ENCODE measurements at regions of chr2 and their contacts with region 1.

Region 1: GRCh38 chr2:24382363-24383073 is 22.2 kb upstream of the ITSN2 start:
- DNase-seq: peak; percentile 32 to 83 (median 50)
- ATAC-seq: peak; percentile 94
- H3K4me3 ChIP-seq: no peak overlapping the region
- H3K4me3 Mint-ChIP-seq: no peak overlapping the region
- H3K27ac ChIP-seq: no peak overlapping the region
- H3K27ac Mint-ChIP-seq: no peak overlapping the region
- H3K4me1 ChIP-seq: no peaks in the 10 kb centered on the region
- H3K4me1 Mint-ChIP-seq: no peaks in the 10 kb centered on the region
- H3K27me3 ChIP-seq: no peaks in the 10 kb centered on the region
- H3K27me3 Mint-ChIP-seq: no peaks in the 10 kb centered on the region
- CTCF ChIP-seq: peak; percentile 86

Region 2: DNA sequence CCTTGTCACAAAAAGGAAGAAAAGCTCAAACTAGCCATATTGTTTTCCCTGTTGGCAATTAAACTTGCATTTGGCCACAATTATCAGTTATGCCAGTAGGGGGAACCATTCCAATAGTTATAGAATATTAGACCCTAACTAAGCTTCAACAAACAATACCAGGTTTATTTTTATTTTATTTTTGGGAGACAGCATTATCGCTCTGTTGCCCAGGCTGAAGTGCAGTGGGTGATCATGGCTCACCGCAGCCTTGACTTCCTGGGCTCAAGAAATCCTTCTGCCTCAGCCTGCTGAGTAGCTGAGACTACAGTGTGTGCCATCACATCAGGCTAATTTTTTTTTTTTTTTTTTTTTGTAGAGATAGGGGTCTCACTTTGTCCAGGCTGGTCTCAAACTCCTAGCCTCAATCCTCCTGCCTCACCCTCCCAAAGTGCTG is 557.7 kb before region 1 on chr2:
- CTCF ChIA-PET with region 1: no interaction called
- POLR2A ChIA-PET with region 1: no interaction called
- intact Hi-C with region 1: loop called (anchors 5 kb)
- DNase-seq: peak in 6 of 14 experiments; percentile 4 to 72 (median 51)
- ATAC-seq: peak; percentile 70
- H3K4me3 ChIP-seq: no peak overlapping the region
- H3K4me3 Mint-ChIP-seq: no peak overlapping the region
- H3K27ac ChIP-seq: no peak overlapping the region
- H3K27ac Mint-ChIP-seq: no peak overlapping the region
- H3K4me1 ChIP-seq: no peaks in the 10 kb centered on the region
- H3K4me1 Mint-ChIP-seq: no peaks in the 10 kb centered on the region
- H3K27me3 ChIP-seq: no peaks in the 10 kb centered on the region
- H3K27me3 Mint-ChIP-seq: no peaks in the 10 kb centered on the region
- CTCF ChIP-seq: peak; percentile 79

Region 3: DNA sequence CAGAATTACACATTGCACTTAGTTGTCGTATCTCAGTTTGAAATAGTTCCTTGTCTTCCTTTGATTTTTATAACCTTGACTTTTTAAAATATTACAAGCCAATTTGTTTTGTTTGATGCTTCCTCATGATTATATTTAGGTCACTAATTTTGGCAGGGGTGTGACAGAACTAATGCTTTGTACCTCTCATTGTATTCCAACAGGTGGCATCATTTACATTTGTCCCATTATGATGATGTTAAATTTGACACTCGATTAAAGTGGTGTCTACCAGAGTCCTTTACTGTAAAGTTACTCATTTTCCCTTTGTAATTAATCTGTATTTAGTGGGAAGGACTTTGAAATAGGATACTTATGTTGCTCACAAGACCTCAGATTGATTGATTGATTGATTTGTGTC is 394.1 kb before region 1 on chr2:
- CTCF ChIA-PET with region 1: no interaction called
- POLR2A ChIA-PET with region 1: no interaction called
- intact Hi-C with region 1: loop called in 1 of 2 experiments (anchors 10 kb)
- DNase-seq: peak in 3 of 14 experiments; percentile 40 to 44 (median 43)
- ATAC-seq: peak; percentile 66
- H3K4me3 ChIP-seq: no peak overlapping the region
- H3K4me3 Mint-ChIP-seq: no peak overlapping the region
- H3K27ac ChIP-seq: no peak overlapping the region
- H3K27ac Mint-ChIP-seq: no peak overlapping the region
- H3K4me1 ChIP-seq: no peaks in the 10 kb centered on the region
- H3K4me1 Mint-ChIP-seq: no peaks in the 10 kb centered on the region
- H3K27me3 ChIP-seq: no peaks in the 10 kb centered on the region
- H3K27me3 Mint-ChIP-seq: no peaks in the 10 kb centered on the region
- CTCF ChIP-seq: peak; percentile 39

Region 4: GRCh38 chr2:24228470-24228869 is 154.0 kb before region 1 on chr2:
- CTCF ChIA-PET with region 1: no interaction called
- POLR2A ChIA-PET with region 1: no interaction called
- intact Hi-C with region 1: loop called (anchors 2 kb)
- DNase-seq: peak in 1 of 14 experiments; percentile 9
- ATAC-seq: no peak
- H3K4me3 ChIP-seq: no peak overlapping the region
- H3K4me3 Mint-ChIP-seq: no peak overlapping the region
- H3K27ac ChIP-seq: no peak overlapping the region
- H3K27ac Mint-ChIP-seq: no peak overlapping the region
- H3K4me1 ChIP-seq: no peaks in the 10 kb centered on the region
- H3K4me1 Mint-ChIP-seq: no peaks in the 10 kb centered on the region
- H3K27me3 ChIP-seq: no peaks in the 10 kb centered on the region
- H3K27me3 Mint-ChIP-seq: no peaks in the 10 kb centered on the region
- CTCF ChIP-seq: no peak

Region 5: DNA sequence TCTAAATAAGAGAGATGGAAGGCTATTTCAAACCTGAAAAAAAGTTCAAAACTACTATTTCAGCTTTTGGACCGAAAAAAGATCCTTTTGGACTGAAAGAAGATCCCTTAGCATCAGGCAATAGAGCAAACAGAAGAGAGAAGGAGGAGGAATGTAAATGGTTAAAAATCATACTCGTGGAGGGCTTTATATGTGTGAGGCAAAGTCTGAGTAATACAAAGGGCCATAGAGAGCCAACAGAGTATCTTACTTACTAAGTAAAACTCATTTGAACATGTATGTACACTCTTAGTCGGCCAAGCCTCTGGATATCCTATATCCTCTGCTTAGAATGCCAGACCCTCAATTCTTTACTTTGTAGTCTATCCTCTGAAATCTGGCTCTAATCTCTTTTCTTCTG is 77.9 kb before region 1 on chr2:
- CTCF ChIA-PET with region 1: no interaction called
- POLR2A ChIA-PET with region 1: no interaction called
- intact Hi-C with region 1: loop called in 1 of 2 experiments (anchors 5 kb)
- DNase-seq: no peak
- ATAC-seq: no peak
- H3K4me3 ChIP-seq: no peak overlapping the region
- H3K4me3 Mint-ChIP-seq: no peak overlapping the region
- H3K27ac ChIP-seq: no peak overlapping the region
- H3K27ac Mint-ChIP-seq: no peak overlapping the region
- H3K4me1 ChIP-seq: no peaks in the 10 kb centered on the region
- H3K4me1 Mint-ChIP-seq: no peaks in the 10 kb centered on the region
- H3K27me3 ChIP-seq: no peaks in the 10 kb centered on the region
- H3K27me3 Mint-ChIP-seq: no peaks in the 10 kb centered on the region
- CTCF ChIP-seq: no peak

Region 6: DNA sequence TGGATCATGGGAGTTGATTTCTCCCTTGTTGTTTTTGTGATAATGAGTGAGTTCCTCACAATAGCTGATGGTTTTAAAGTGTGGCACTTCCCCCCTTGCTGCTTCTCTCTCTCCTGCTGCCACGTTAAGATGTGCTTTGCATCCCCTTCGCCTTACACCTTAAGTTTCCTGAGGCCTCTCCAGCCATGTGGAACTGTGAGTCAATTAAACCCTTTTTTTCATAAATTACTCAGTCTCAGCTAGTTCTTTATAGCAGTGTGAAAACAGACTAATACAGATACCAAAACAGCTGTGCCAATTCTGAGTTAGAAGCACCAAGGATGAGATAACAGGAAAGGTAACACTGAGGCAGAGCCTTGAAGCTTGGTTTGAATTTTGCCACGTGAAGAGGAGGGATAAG is 66.8 kb before region 1 on chr2:
- CTCF ChIA-PET with region 1: no interaction called
- POLR2A ChIA-PET with region 1: no interaction called
- intact Hi-C with region 1: loop called in 1 of 2 experiments (anchors 5 kb)
- DNase-seq: no peak
- ATAC-seq: no peak
- H3K4me3 ChIP-seq: no peak overlapping the region
- H3K4me3 Mint-ChIP-seq: no peak overlapping the region
- H3K27ac ChIP-seq: no peak overlapping the region
- H3K27ac Mint-ChIP-seq: no peak overlapping the region
- H3K4me1 ChIP-seq: peaks cover 8% of the 10 kb centered on the region
- H3K4me1 Mint-ChIP-seq: peaks cover 31% of the 10 kb centered on the region
- H3K27me3 ChIP-seq: no peaks in the 10 kb centered on the region
- H3K27me3 Mint-ChIP-seq: no peaks in the 10 kb centered on the region
- CTCF ChIP-seq: no peak

Measured in CD4-positive, alpha-beta T cell (primary cell).